Caco-2 (cell line): ENCODE measurements at regions of chr11 and their contacts with region 1.

Region 1: GRCh38 chr11:106466521-106467080 is 389.1 kb downstream of the AASDHPPT start:
- DNase-seq: peak; percentile 76 to 85
- H3K4me3 ChIP-seq: no peak overlapping the region
- H3K4me3 Mint-ChIP-seq: peak overlapping the region; percentile 67
- H3K27ac Mint-ChIP-seq: peak overlapping the region; percentile 88
- H3K4me1 ChIP-seq: peaks cover 92% of the 10 kb centered on the region
- H3K4me1 Mint-ChIP-seq: peaks cover 77% of the 10 kb centered on the region
- H3K27me3 ChIP-seq: no peaks in the 10 kb centered on the region
- H3K27me3 Mint-ChIP-seq: no peaks in the 10 kb centered on the region
- CTCF ChIP-seq: no peak

Region 2: DNA sequence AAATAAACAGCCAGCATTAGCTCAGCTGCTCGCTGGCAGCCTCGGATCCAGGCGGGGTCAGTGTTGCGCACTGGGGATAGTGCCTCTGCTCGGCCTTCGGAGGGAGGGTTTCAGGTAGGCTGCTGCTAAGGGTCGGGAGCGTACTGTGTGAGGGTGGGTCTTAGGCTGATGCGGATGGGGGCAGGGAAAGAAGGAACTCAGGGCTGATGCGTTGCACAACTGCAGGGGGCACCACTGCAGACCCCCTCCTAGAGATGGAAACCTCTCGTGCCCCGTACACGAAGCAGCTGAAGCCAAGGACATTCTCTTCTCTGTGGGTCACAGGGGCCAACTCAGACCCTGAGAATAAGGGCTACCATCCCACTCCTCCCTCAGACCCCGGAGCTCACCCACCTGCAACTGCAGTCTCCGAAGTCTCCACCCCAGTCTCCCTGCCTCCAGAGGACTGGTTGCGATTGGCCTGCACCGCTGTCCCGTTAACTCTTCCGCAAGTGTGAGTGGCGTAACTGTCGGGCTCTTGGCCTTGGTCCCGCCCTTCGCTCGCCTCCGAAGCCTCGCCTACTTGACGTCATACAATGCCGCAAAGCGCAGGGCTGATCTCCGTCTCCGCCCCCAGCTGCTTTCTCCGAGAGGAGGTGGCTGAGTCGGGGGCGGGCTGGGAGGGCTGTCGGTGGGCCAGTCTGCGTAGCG is 389.5 kb before region 1 on chr11 and contains the start of gene KBTBD3:
- CTCF ChIA-PET with region 1: no interaction called
- POLR2A ChIA-PET with region 1: no interaction called
- intact Hi-C with region 1: loop called (anchors 1 kb)
- DNase-seq: peak; percentile 100
- H3K4me3 ChIP-seq: peak within 1 kb of the TSS; percentile 99
- H3K4me3 Mint-ChIP-seq: peak within 1 kb of the TSS; percentile 94
- H3K27ac Mint-ChIP-seq: peak within 1 kb of the TSS; percentile 94
- H3K4me1 ChIP-seq: peaks cover 19% of the 10 kb centered on the region
- H3K4me1 Mint-ChIP-seq: peaks cover 18% of the 10 kb centered on the region
- H3K27me3 ChIP-seq: no peaks in the 10 kb centered on the region
- H3K27me3 Mint-ChIP-seq: no peaks in the 10 kb centered on the region
- CTCF ChIP-seq: peak; percentile 34 to 72
- total RNA-seq, gene KBTBD3: 3.2 and 5.6 TPM in 2 replicates

Region 3: DNA sequence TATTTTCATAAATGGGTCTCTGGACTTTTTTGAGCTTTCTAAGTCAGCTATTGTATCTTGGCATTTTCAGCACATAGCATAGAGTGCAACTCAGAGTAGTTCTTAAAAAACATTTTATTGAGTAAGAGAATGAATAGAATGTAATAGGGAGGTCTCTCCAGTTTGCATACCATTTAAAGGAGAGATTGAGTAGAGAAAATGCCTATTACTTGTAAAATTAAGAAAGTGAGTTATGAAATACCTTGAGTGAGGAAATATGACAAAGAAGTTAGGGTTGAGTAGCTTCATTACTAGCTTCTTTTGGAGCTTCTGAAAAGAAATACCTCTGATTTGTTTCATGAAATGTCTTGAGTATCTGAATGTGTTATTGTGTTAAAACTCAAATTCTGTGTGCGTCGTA is 249.1 kb before region 1 on chr11:
- CTCF ChIA-PET with region 1: no interaction called
- POLR2A ChIA-PET with region 1: no interaction called
- intact Hi-C with region 1: loop called (anchors 1 kb)
- DNase-seq: no peak
- H3K4me3 ChIP-seq: no peak overlapping the region
- H3K4me3 Mint-ChIP-seq: peak overlapping the region; percentile 0
- H3K27ac Mint-ChIP-seq: peak overlapping the region; percentile 60
- H3K4me1 ChIP-seq: peaks cover 35% of the 10 kb centered on the region
- H3K4me1 Mint-ChIP-seq: peaks cover 18% of the 10 kb centered on the region
- H3K27me3 ChIP-seq: no peaks in the 10 kb centered on the region
- H3K27me3 Mint-ChIP-seq: no peaks in the 10 kb centered on the region
- CTCF ChIP-seq: no peak

Region 4: GRCh38 chr11:106389096-106389495 is 77.5 kb before region 1 on chr11:
- CTCF ChIA-PET with region 1: no interaction called
- POLR2A ChIA-PET with region 1: no interaction called
- intact Hi-C with region 1: loop called (anchors 1 kb)
- DNase-seq: peak; percentile 41 to 52
- H3K4me3 ChIP-seq: no peak overlapping the region
- H3K4me3 Mint-ChIP-seq: no peak overlapping the region
- H3K27ac Mint-ChIP-seq: peak overlapping the region; percentile 27
- H3K4me1 ChIP-seq: peaks cover 25% of the 10 kb centered on the region
- H3K4me1 Mint-ChIP-seq: peaks cover 9% of the 10 kb centered on the region
- H3K27me3 ChIP-seq: no peaks in the 10 kb centered on the region
- H3K27me3 Mint-ChIP-seq: no peaks in the 10 kb centered on the region
- CTCF ChIP-seq: no peak

Region 5: DNA sequence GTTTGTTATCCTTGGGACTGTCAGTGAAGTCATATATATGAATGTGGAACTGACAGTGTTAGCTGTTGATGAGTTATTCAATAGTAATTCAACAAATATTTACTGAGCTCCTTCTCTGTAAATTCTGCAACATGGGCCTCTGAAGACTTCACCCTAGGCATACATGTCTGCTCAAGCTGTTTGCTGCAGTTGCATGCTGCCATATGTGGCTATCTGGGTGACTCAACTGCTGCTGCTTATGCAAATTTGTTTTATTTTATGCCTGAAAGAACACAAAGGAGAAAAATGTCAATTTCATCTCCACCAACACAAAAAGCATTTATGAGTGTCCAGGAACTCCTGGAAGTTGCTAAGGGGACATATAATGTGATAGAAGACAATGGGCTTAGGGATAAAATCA is 28.4 kb after region 1 on chr11:
- CTCF ChIA-PET with region 1: no interaction called
- POLR2A ChIA-PET with region 1: no interaction called
- intact Hi-C with region 1: loop called (anchors 1 kb)
- DNase-seq: peak; percentile 44 to 47
- H3K4me3 ChIP-seq: no peak overlapping the region
- H3K4me3 Mint-ChIP-seq: no peak overlapping the region
- H3K27ac Mint-ChIP-seq: peak overlapping the region; percentile 7
- H3K4me1 ChIP-seq: peaks cover 7% of the 10 kb centered on the region
- H3K4me1 Mint-ChIP-seq: peaks cover 28% of the 10 kb centered on the region
- H3K27me3 ChIP-seq: no peaks in the 10 kb centered on the region
- H3K27me3 Mint-ChIP-seq: no peaks in the 10 kb centered on the region
- CTCF ChIP-seq: no peak

Region 6: DNA sequence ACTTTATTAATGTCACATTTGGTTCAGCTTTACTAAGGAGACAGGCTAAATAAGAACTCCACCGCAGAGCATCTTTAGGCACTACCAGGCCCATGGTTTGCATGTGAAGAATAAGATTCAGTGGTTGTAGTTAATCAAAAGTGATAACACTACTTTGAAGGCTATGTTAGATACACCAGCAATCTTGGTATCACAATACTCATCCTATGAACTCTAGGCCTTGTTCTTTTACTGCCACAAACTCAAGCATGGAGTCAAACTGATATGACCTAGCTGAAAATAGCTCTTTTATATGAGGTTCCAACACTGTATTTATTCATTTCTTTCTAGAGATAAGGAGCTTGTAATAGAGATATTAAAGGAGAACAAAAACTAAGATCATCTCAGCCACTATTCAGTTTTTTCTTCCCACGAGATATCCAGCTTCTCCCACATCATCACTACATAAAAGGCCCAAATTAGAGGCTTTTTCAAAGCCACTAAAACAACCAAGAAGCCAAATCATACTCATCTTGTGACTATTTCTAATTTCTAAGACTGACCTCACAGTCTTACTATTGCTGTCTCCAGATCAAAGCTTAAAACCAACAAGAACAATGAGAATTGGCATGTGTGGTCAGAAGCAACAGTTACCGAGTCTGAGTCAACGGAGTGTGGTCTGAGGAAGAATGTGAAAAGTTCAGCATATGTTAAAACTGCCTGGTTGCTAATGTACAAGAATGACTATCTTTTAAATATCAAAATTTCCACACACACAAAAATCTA is 576.8 kb after region 1 on chr11:
- CTCF ChIA-PET with region 1: no interaction called
- POLR2A ChIA-PET with region 1: no interaction called
- intact Hi-C with region 1: loop called (anchors 5 kb)
- DNase-seq: no peak
- H3K4me3 ChIP-seq: no peak overlapping the region
- H3K4me3 Mint-ChIP-seq: no peak overlapping the region
- H3K27ac Mint-ChIP-seq: no peak overlapping the region
- H3K4me1 ChIP-seq: no peaks in the 10 kb centered on the region
- H3K4me1 Mint-ChIP-seq: no peaks in the 10 kb centered on the region
- H3K27me3 ChIP-seq: no peaks in the 10 kb centered on the region
- H3K27me3 Mint-ChIP-seq: no peaks in the 10 kb centered on the region
- CTCF ChIP-seq: no peak